Endothelial cell of umbilical vein (primary cell): ENCODE measurements at regions of chr9 and their contacts with region 1.

Region 1: GRCh38 chr9:77751341-77752091 is 103.4 kb upstream of the GNA14 start:
- DNase-seq: peak; percentile 85
- H3K4me3 ChIP-seq: no peak overlapping the region
- H3K27ac ChIP-seq: peak overlapping the region; percentile 55
- H3K4me1 ChIP-seq: peaks cover 24% of the 10 kb centered on the region
- H3K27me3 ChIP-seq: no peaks in the 10 kb centered on the region
- CTCF ChIP-seq: peak; percentile 40 to 56
- POLR2A ChIP-seq: no peak

Region 2: DNA sequence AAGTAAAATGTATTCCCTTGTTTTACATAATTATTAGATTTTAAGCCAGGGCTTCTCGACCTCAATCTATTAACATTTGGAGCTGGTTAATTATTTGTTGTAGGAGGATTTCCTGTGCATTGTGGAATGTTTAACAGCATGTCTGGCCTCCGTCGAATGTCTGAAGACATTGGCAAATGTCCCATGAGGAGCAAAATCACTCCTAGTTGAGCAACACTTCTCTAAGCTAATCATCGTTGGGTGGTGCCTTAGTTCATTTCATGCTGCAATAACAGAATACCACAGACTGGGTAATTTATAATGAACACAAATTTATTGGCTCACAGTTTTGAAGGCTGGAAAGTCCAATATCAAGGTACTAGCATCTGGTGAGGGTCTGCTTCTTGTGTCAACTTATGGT is 587.6 kb before region 1 on chr9:
- CTCF ChIA-PET with region 1: interaction called, 12 read pairs
- POLR2A ChIA-PET with region 1: no interaction called
- dilution Hi-C with region 1: no loop called
- intact Hi-C with region 1: no loop called
- DNase-seq: peak; percentile 64
- H3K4me3 ChIP-seq: no peak overlapping the region
- H3K27ac ChIP-seq: no peak overlapping the region
- H3K4me1 ChIP-seq: peaks cover 17% of the 10 kb centered on the region
- H3K27me3 ChIP-seq: no peaks in the 10 kb centered on the region
- CTCF ChIP-seq: no peak
- POLR2A ChIP-seq: no peak

Region 3: DNA sequence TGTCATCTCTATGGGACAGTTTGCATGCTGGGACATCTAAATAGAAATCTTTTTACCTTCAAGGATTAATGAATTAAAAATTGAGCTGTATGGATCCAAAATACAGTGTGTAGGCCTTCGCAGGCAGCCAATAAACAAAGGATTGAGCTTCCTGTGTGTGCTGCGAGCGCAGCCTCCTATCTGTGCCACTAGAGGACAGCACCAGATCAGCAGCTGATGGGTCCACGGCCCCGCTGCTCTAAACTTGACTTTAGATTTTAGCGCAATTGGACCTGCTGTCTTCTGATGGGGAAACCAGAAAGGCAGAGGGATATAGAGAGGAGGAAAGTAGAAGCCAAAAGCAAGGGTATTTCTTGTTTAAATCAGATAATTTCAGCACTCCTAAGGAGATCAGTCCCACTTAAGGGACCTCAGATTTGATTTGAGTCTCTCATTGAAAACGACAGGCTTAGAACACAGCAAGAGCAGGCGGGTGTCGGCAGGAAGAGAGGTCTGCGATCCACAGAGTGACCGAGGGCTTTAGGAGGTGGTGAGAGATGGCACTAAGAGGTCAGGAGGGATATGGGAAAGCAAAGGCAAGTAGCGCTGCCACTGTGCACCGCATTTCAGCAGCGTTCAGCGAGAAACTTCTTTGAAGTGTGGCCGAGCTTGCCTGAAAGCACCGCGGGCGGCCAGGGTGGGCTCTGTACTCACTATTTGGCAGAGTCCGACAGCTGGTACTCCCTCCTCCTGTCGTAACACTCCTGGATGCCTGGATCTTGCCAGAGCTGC is 317.7 kb before region 1 on chr9:
- CTCF ChIA-PET with region 1: interaction called, 108 read pairs
- POLR2A ChIA-PET with region 1: no interaction called
- dilution Hi-C with region 1: no loop called
- intact Hi-C with region 1: loop called (anchors 1 kb)
- DNase-seq: peak; percentile 68
- H3K4me3 ChIP-seq: no peak overlapping the region
- H3K27ac ChIP-seq: no peak overlapping the region
- H3K4me1 ChIP-seq: peaks cover 16% of the 10 kb centered on the region
- H3K27me3 ChIP-seq: no peaks in the 10 kb centered on the region
- CTCF ChIP-seq: peak; percentile 96
- POLR2A ChIP-seq: no peak

Region 4: DNA sequence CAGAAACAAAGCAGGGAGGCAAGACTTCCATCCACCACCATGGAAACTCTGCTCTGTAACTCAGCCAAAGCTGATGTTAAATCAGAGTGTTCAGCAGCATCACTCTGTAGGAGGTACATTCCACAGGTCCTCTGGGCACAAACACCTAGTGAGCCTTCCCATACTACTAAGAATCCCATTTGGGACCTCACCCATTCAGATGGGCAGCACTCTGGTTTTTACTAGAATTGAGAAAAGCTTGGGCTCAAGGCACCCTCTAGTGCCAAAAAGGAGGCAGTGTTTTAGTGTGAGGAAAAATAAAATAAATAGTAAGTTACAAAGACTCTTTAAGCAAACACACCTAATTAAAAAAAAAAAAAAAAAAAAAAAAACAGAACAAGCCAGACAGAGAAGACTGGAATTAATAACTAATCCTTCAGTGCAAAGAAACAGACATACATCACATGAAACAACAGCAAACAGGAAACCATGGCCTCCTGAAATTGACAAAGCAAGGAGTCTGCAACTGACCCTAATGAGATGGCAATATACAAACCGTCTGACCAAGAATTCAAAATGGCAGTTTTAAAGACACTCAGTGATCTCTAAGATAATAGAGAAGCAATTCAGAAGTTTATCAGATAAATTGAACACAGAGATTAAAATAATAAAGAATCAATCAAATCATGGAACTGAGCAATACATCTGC is 262.9 kb before region 1 on chr9:
- CTCF ChIA-PET with region 1: interaction called, 12 read pairs
- POLR2A ChIA-PET with region 1: no interaction called
- dilution Hi-C with region 1: no loop called
- intact Hi-C with region 1: no loop called
- DNase-seq: peak; percentile 18
- H3K4me3 ChIP-seq: no peak overlapping the region
- H3K27ac ChIP-seq: no peak overlapping the region
- H3K4me1 ChIP-seq: no peaks in the 10 kb centered on the region
- H3K27me3 ChIP-seq: no peaks in the 10 kb centered on the region
- CTCF ChIP-seq: peak; percentile 23 to 41
- POLR2A ChIP-seq: no peak

Region 5: DNA sequence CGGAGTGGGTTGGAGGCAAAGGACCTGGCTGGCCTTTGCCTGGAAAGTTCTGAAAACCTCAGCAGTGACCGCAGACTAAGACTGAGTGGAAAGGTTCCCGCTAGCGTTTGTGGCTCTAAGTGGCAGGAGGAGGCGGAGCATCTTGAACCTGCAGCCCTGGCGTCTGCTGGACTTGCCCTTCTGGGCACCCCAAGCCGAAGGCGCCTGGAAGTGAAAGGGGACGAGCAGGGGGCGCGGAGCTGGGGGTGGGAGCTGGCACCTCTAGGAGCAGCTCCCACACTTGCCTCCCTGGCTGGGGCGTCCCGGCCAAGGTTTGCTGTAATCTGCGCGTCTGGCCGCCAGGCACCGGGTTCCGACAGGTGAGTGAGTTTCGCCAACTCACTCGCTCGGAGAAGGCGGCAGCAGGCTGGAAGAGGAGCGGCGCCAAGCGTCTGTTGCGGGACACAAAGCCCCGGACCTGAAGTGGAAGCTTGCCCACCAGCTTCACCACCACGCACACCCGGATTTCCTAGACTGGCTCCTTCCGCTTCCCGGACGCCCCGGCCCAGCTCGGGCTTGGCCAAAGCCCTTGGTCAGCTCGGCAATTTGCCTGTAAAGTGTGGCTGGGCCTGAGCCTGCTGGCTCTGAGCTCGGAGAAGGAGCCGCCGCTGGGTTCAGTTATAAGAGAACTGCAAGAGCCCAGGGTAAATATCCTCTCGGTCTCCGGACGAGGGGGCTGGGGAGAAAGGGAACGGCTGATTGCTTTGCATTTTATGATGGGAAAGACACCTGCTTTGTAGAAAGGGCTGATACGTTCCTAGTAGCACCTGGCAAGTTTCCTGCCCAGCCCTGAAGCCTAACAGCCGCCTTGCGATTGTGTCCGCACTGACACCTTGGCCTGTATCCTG is 103.0 kb before region 1 on chr9 and contains the start of gene GNA14:
- CTCF ChIA-PET with region 1: interaction called, 57 read pairs
- POLR2A ChIA-PET with region 1: no interaction called
- dilution Hi-C with region 1: no loop called
- intact Hi-C with region 1: loop called (anchors 1 kb)
- DNase-seq: peak; percentile 51
- H3K4me3 ChIP-seq: peak within 1 kb of the TSS; percentile 35 to 69 (median 54)
- H3K27ac ChIP-seq: no peak within 1 kb of the TSS
- H3K4me1 ChIP-seq: peaks cover 18% of the 10 kb centered on the region
- H3K27me3 ChIP-seq: peaks cover 1 to 6% of the 10 kb centered on the region in 2 experiments
- CTCF ChIP-seq: no peak
- POLR2A ChIP-seq: no peak
- total RNA-seq, gene GNA14: 3.0 and 3.3 TPM in 2 replicates

Region 6: GRCh38 chr9:77707383-77708063 is 44.0 kb before region 1 on chr9:
- CTCF ChIA-PET with region 1: interaction called, 16 read pairs
- POLR2A ChIA-PET with region 1: interaction called, 7 read pairs
- dilution Hi-C with region 1: no loop called
- intact Hi-C with region 1: loop called (anchors 1 kb)
- DNase-seq: peak; percentile 96
- H3K4me3 ChIP-seq: peak overlapping the region in 1 of 3 experiments; percentile 46
- H3K27ac ChIP-seq: peak overlapping the region; percentile 82
- H3K4me1 ChIP-seq: peaks cover 53% of the 10 kb centered on the region
- H3K27me3 ChIP-seq: no peaks in the 10 kb centered on the region
- CTCF ChIP-seq: no peak
- POLR2A ChIP-seq: peak; percentile 24

Region 7: DNA sequence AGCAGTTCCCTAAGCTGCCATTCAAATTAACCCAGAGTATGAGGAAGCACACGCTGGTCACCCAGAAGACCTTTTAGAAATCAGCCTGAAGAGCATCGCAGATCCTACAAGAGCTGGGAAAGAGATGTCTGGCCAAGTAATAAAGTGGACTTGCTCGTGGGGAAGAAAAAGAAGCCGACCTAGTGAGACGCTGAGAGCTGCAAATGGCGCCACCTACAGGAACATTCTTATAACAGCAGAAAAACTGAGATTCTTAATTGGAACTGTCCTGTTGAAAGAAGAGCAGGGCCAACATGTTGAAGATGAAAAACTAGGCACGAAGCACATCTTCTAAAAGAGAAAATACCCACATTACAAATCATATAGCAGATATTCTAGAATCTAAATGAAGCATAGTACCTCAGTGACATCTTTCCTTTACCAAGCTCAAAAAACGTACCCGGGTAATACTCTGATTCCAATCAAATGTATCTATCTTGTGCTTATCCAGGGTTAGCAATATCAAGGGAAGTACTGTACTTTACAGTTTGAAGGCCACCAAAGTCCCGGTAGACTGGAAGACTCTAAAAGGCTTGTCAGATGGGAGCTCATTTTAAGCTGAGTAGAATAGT is 284.0 kb after region 1 on chr9:
- CTCF ChIA-PET with region 1: interaction called, 22 read pairs
- POLR2A ChIA-PET with region 1: no interaction called
- dilution Hi-C with region 1: no loop called
- intact Hi-C with region 1: loop called (anchors 1 kb)
- DNase-seq: peak; percentile 88
- H3K4me3 ChIP-seq: no peak overlapping the region
- H3K27ac ChIP-seq: no peak overlapping the region
- H3K4me1 ChIP-seq: peaks cover 38% of the 10 kb centered on the region
- H3K27me3 ChIP-seq: no peaks in the 10 kb centered on the region
- CTCF ChIP-seq: peak; percentile 69 to 74
- POLR2A ChIP-seq: no peak